GM12878 (cell line): ENCODE measurements at regions of chr11 and their contacts with region 1.

Region 1: DNA sequence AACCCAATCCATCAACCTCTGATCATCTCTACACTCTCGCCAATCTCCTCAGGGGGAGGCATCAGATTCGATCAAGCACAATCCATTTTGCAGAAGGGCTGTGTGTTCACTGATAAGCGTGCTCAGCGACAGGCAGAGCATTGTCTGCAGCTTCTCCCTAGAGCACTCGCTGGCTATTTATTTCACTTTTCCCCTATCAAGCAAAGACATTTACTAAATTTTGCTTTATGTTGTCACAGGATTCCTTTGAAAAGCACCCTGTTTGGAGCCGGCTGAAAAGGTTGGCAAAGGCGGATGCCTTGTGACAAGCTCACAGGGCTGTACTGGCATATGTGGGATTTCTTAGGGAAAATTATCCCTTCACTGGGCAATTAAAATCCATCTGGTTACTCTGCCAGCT is 1381.5 kb upstream of the TENM4 start:
- DNase-seq: no peak
- ATAC-seq: no peak
- H3K4me3 ChIP-seq: no peak overlapping the region
- H3K27ac ChIP-seq: no peak overlapping the region
- H3K4me1 ChIP-seq: no peaks in the 10 kb centered on the region
- H3K27me3 ChIP-seq: no peaks in the 10 kb centered on the region
- CTCF ChIP-seq: no peak
- EP300 ChIP-seq: no peak
- POLR2A ChIP-seq: no peak
- RAD21 ChIP-seq: no peak

Region 2: GRCh38 chr11:80838153-80838552 is 15.8 kb after region 1 on chr11:
- CTCF ChIA-PET with region 1: interaction called, 7 read pairs
- POLR2A ChIA-PET with region 1: interaction called, 17 read pairs
- RAD21 ChIA-PET with region 1: interaction called, 9 read pairs
- SMC1A ChIA-PET with region 1: interaction called, 27 read pairs
- in situ Hi-C with region 1: no loop called
- intact Hi-C with region 1: no loop called
- DNase-seq: peak; percentile 31
- ATAC-seq: peak; percentile 92
- H3K4me3 ChIP-seq: no peak overlapping the region
- H3K27ac ChIP-seq: no peak overlapping the region
- H3K4me1 ChIP-seq: no peaks in the 10 kb centered on the region
- H3K27me3 ChIP-seq: no peaks in the 10 kb centered on the region
- CTCF ChIP-seq: no peak
- EP300 ChIP-seq: peak; percentile 15 to 21; a peak in 1 of 4 replicates
- POLR2A ChIP-seq: no peak
- RAD21 ChIP-seq: no peak

Region 3: DNA sequence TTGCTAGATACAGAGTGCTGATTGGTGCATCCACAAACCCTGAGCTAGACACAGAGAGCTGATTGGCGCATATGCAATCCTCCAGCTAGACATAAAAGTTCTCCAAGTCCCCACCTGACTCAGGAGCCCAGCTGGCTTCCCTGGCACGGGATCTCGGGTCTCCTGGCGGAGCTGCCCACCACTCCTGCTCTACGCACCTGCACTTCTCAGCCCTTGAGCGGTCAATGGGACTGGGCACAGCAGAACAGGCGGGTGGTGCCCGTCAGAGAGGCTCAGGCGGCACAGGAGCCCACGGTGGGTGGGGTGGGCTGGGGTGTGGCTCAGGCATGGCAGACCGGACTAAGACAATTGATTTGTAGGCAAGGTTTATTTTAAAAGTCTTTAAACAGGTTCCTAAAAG is 545.9 kb after region 1 on chr11:
- CTCF ChIA-PET with region 1: no interaction called
- POLR2A ChIA-PET with region 1: no interaction called
- RAD21 ChIA-PET with region 1: no interaction called
- SMC1A ChIA-PET with region 1: no interaction called
- in situ Hi-C with region 1: no loop called
- intact Hi-C with region 1: no loop called
- DNase-seq: no peak
- ATAC-seq: no peak
- H3K4me3 ChIP-seq: no peak overlapping the region
- H3K27ac ChIP-seq: no peak overlapping the region
- H3K4me1 ChIP-seq: no peaks in the 10 kb centered on the region
- H3K27me3 ChIP-seq: no peaks in the 10 kb centered on the region
- CTCF ChIP-seq: no peak
- EP300 ChIP-seq: no peak
- POLR2A ChIP-seq: no peak
- RAD21 ChIP-seq: no peak